ENCODE measurements at regions of chr15 and their contacts with region 1.

Region 1: DNA sequence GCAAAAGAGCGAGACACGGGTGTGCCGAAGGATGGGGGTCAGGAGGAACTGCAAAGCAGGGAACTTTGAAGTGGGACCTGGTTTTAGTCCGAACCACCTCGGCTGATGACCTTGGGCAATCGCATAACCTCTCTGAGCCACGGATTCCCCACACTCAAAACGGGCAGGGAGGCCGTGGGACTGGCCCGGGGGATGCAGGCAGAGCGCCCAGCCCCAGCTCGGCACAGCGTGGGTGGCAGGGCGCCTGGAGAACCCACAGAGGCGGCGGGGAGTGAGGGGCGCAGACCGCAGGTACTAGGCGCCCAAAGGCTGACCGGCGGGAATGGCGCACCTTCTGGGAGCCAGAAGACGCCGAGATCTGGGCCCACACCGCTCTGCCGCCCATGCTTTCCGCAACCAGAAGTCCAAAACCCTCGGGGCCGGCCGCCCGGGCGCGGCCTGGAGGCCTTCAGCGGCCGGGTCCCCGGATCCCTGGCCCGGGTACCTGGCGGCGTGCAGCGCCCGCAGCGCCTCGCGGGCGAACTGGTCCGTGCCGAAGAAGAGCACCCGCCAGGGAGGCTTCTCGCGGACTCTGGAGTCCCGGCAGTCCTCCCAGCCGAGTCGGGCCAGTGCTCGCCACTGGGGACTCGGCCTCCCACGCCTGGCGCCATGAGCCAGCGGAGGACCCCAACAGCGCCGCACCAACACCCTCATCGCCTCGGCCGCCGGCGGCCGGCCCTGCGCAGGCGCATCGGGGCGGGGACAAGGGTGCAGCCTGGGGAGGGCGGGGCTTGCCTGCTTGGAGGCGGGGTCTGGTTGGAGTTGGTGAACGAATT is at the start of gene MTFMT:
- DNase-seq: peak; percentile 93 to 95
- ATAC-seq: peak; percentile 94 to 98 (median 97)
- H3K4me3 ChIP-seq: peak within 1 kb of the TSS; percentile 45 to 99 (median 94)
- H3K27ac ChIP-seq: peak within 1 kb of the TSS; percentile 8 to 89 (median 84)
- H3K4me1 ChIP-seq: peaks cover 2 to 34% (median 17%) of the 10 kb centered on the region in 9 donors
- H3K27me3 ChIP-seq: no peaks in the 10 kb centered on the region
- CTCF ChIP-seq: peak in 1 of 9 donors; percentile 10
- total RNA-seq, gene MTFMT: 13.5 to 21.9 (median 18.6) TPM

Region 2: GRCh38 chr15:64989416-64990167 is 39.5 kb before region 1 on chr15 and contains the start of gene SPG21:
- intact Hi-C with region 1: loop called in 1 of 10 experiments (anchors 5 kb)
- DNase-seq: peak; percentile 94 to 95
- ATAC-seq: peak; percentile 96 to 97 (median 96)
- H3K4me3 ChIP-seq: peak within 1 kb of the TSS; percentile 81 to 99 (median 95)
- H3K27ac ChIP-seq: peak within 1 kb of the TSS; percentile 81 to 97 (median 93)
- H3K4me1 ChIP-seq: peaks cover 0 to 48% (median 21%) of the 10 kb centered on the region in 9 donors
- H3K27me3 ChIP-seq: no peaks in the 10 kb centered on the region
- CTCF ChIP-seq: no peak
- total RNA-seq, gene SPG21: 36.4 to 56.6 (median 45.9) TPM

Region 3: DNA sequence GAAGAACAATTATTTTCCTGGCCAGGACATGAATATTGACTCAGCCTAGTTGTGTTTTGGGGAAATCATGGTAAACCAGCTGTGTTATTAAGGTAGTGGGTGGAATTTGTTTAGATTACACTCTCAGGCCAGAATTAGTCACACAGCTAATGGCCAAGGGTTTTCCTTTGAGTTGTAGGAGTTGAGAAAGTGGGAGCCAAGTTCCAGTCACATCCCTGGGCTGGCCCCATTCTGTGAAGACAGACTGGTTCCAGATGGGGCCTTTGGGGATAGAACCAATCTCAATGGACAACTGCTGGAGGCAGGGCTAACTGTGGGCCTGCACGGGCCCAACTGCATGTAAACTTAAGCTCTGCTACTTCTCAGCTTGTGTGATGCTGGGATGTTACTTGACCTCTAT is 40.1 kb after region 1 on chr15:
- intact Hi-C with region 1: no loop called
- DNase-seq: peak in 1 of 2 donors; percentile 72
- ATAC-seq: peak; percentile 22 to 69 (median 36)
- H3K4me3 ChIP-seq: no peak overlapping the region
- H3K27ac ChIP-seq: peak overlapping the region; percentile 19 to 92 (median 89)
- H3K4me1 ChIP-seq: peaks cover 29 to 74% (median 51%) of the 10 kb centered on the region in 9 donors
- H3K27me3 ChIP-seq: peaks cover 0 to 42% (median 6%) of the 10 kb centered on the region in 7 donors
- CTCF ChIP-seq: no peak

Region 4: DNA sequence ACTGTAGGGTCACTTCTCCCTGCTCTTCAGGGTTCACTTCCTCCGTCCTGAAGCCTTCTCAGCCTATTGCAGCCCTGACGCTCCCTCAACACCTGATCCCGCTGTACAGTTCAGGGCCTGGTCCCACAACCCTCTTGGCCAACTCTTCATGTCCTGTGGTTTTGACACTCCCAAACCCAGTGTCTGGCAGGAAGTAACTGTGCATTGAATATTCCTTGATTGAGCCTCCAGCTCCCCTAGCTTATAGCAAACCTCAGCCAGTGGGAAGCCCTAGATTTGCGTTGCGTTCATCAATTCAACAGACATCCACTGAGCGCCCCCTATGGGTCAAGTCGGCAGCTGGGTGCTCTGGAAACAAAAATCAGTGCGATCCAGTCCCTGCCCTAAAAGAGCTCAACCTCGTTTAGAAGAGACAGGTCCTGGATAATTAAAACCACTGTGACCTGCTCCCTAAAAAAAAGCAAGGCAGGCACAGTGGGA is 72.3 kb after region 1 on chr15:
- intact Hi-C with region 1: loop called in 2 of 10 experiments (anchors 2 to 5 kb)
- DNase-seq: peak; percentile 69 to 70
- ATAC-seq: peak in 7 of 8 donors; percentile 37 to 69 (median 60)
- H3K4me3 ChIP-seq: no peak overlapping the region
- H3K27ac ChIP-seq: no peak overlapping the region
- H3K4me1 ChIP-seq: peaks cover 0 to 7% (median 0%) of the 10 kb centered on the region in 9 donors
- H3K27me3 ChIP-seq: no peaks in the 10 kb centered on the region
- CTCF ChIP-seq: peak; percentile 59 to 83 (median 77)

Region 5: GRCh38 chr15:65264863-65265430 is 235.8 kb after region 1 on chr15:
- intact Hi-C with region 1: loop called in 1 of 10 experiments (anchors 10 kb)
- DNase-seq: no peak
- ATAC-seq: peak in 7 of 8 donors; percentile 25 to 74 (median 52)
- H3K4me3 ChIP-seq: no peak overlapping the region
- H3K27ac ChIP-seq: peak overlapping the region in 1 of 10 donors; percentile 36
- H3K4me1 ChIP-seq: peaks cover 0 to 15% (median 0%) of the 10 kb centered on the region in 9 donors
- H3K27me3 ChIP-seq: no peaks in the 10 kb centered on the region
- CTCF ChIP-seq: no peak

Region 6: DNA sequence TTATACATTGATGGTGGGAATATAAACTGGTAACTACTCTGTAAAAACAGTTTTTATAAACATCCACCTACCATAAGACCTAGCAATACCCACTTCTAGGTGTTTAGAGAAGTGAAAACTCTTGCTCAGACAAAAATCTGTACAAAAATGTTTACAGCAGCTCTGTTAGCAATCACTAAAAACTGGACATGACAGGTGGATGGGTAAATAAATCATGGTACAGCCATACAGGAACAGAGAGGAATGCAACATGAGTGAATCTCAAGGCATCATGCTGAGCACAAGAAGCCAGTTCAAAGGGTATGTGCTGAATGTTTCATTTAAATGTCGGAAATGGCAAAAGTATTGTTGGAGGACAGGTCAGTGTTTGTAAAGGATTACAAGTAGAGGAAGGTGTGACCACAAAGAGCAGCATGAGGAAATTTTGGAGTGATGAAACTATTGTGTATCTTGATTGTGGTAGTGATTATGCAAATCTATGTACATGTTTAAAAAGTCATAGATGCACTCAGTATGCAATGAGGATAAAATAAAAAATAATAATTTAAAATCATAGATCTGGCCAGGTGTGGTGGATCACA is 263.9 kb after region 1 on chr15:
- intact Hi-C with region 1: loop called in 4 of 10 experiments (anchors 10 kb)
- DNase-seq: no peak
- ATAC-seq: no peak
- H3K4me3 ChIP-seq: no peak overlapping the region
- H3K27ac ChIP-seq: no peak overlapping the region
- H3K4me1 ChIP-seq: peaks cover 0 to 28% (median 15%) of the 10 kb centered on the region in 9 donors
- H3K27me3 ChIP-seq: no peaks in the 10 kb centered on the region
- CTCF ChIP-seq: no peak

Measured in heart right ventricle (tissue), 16 donors.